HCT116 (cell line): ENCODE measurements at regions of chr17 and their contacts with region 1.

Region 1: DNA sequence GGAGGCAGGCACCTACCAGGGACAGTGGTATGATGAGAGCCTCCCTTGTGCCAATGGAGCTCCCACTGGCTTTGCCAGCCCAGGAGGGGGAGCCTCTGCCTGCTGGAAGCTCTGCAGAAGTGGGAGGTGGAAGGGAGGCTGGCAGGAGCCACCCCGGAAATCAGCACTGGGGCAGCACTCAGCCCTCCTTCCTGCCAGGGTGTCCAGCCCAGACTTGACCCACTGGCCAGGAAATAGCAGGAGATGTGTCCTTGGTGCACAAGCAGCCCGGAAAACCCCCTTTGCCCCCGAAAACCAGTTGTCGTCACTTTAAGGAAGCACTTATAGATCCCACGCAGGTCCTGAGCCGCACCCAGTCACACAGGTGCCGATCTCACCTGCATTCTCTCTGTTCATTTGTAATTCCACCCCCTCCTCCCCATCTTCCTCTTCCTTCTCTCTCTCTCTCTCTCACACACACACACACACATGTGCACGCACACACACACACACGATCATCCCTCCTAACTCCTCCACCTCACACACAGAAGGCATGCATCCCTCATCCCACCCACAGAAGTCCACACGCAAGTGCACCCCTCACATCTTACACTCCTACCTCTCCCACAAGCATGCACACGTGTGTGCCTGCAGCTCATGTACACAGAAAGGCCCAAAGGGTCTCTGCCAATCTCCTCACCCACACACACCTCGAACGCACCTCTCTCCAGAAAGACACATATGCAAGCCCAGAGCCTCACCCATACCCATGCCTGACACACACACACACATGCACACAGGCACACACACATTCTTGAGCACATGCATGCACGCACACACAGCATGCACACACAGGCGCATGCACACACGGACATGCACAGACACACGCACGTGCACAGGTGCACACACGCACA is 49.1 kb upstream of the CACNG4 start:
- DNase-seq: peak; percentile 39
- ATAC-seq: peak; percentile 98
- H3K4me3 ChIP-seq: no peak overlapping the region
- H3K27ac ChIP-seq: no peak overlapping the region
- H3K4me1 ChIP-seq: peaks cover 4 to 10% of the 10 kb centered on the region in 2 experiments; a peak in 2 of 4 replicates
- H3K27me3 ChIP-seq: no peaks in the 10 kb centered on the region
- CTCF ChIP-seq: peak; percentile 66 to 82 (median 79)
- POLR2A ChIP-seq: no peak
- RAD21 ChIP-seq: peak; percentile 96

Region 2: DNA sequence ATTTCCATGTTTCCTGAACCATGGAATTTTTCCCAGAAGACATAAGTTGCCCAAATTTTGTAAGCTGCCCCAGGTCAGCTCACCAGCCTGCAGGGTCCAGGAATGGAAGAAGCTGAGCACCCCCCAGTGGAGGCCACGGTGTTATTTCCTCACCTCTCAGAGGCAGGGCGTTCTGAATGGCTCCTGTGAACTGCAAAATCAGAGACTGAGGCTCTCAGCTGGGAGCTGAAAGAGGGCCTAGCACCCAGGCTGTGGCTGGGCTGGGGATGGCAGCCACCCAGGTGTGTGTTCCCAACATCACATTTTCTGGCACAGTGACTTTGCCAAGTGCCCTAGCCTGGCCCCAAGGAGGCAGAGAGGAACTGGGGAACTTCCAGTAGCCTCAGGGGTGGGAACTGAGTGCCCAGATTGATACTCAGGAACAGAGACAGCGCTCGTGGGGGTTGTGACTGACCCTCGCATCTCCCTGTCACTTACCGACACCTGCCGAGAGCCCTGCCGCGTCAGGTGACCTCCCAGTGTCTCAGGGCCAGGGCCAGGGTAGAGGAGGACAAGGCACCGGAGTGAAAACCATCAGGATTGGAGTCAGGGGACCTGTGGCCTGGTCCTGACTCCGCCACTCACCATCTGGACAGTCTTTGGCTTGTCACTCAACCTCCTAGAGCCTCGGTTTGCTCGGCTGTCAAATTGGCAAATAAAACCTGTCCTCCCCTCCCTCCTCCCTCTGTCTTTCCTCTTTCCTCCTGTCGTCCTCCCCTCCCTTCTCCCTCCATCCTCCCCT is 60.3 kb after region 1 on chr17:
- CTCF ChIA-PET with region 1: interaction called, 53 read pairs
- POLR2A ChIA-PET with region 1: interaction called, 4 read pairs
- RAD21 ChIA-PET with region 1: interaction called, 19 to 38 read pairs
- intact Hi-C with region 1: loop called (anchors 1 kb)
- DNase-seq: peak; percentile 48
- ATAC-seq: peak; percentile 94
- H3K4me3 ChIP-seq: no peak overlapping the region
- H3K27ac ChIP-seq: no peak overlapping the region
- H3K4me1 ChIP-seq: peaks cover 10 to 16% of the 10 kb centered on the region in 2 experiments; a peak in 2 of 4 replicates
- H3K27me3 ChIP-seq: no peaks in the 10 kb centered on the region
- CTCF ChIP-seq: peak; percentile 71 to 92 (median 86)
- POLR2A ChIP-seq: no peak
- RAD21 ChIP-seq: peak; percentile 98

Region 3: GRCh38 chr17:67157732-67158639 is 242.5 kb after region 1 on chr17:
- CTCF ChIA-PET with region 1: interaction called, 16 read pairs
- POLR2A ChIA-PET with region 1: no interaction called
- RAD21 ChIA-PET with region 1: interaction called, 4 to 5 read pairs
- intact Hi-C with region 1: loop called (anchors 1 kb)
- DNase-seq: peak; percentile 10
- ATAC-seq: peak; percentile 92
- H3K4me3 ChIP-seq: no peak overlapping the region
- H3K27ac ChIP-seq: no peak overlapping the region
- H3K4me1 ChIP-seq: no peaks in the 10 kb centered on the region
- H3K27me3 ChIP-seq: no peaks in the 10 kb centered on the region
- CTCF ChIP-seq: peak; percentile 40 to 49 (median 41); a peak in 5 of 6 replicates
- POLR2A ChIP-seq: no peak
- RAD21 ChIP-seq: peak; percentile 71